Heart right ventricle (tissue), 16 donors: ENCODE measurements at regions of chrX and their contacts with region 1.

Region 1: GRCh38 chrX:148049441-148049840 is 68.3 kb downstream of the FMR1NB start:
- DNase-seq: no peak
- ATAC-seq: no peak
- H3K4me3 ChIP-seq: no peak overlapping the region
- H3K27ac ChIP-seq: no peak overlapping the region
- H3K4me1 ChIP-seq: no peaks in the 10 kb centered on the region
- H3K27me3 ChIP-seq: peaks cover 0 to 4% (median 0%) of the 10 kb centered on the region in 7 donors
- CTCF ChIP-seq: peak; percentile 9 to 67 (median 53)

Region 2: GRCh38 chrX:149286940-149287349 is 1237.5 kb after region 1 on chrX:
- intact Hi-C with region 1: loop called in 4 of 10 experiments (anchors 5 to 10 kb)
- DNase-seq: peak in 1 of 2 donors; percentile 4
- ATAC-seq: no peak
- H3K4me3 ChIP-seq: no peak overlapping the region
- H3K27ac ChIP-seq: no peak overlapping the region
- H3K4me1 ChIP-seq: no peaks in the 10 kb centered on the region
- H3K27me3 ChIP-seq: peaks cover 0 to 14% (median 0%) of the 10 kb centered on the region in 7 donors
- CTCF ChIP-seq: peak; percentile 14 to 74 (median 56)

Region 3: DNA sequence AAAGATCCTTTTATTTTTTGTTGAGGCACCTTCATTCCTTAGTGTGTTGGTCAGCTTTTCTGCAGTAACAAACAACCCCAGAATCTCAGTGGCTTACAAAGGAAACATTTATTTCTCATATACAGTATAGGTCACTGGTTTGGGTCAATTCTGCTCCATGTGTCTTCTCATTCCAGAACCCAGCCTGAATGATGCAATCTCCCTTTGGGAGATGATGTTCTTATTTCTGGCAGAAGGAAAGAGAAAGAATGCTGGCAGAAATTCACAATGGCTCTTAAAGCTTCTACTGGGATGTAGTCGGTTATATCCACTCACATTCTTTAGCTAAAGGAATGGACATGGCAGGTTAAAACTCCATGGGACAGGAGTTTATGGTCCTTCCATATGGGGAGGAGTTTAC is 1413.4 kb after region 1 on chrX:
- intact Hi-C with region 1: loop called in 2 of 10 experiments (anchors 10 kb)
- DNase-seq: peak in 1 of 2 donors; percentile 9
- ATAC-seq: peak in 3 of 8 donors; percentile 33 to 69 (median 61)
- H3K4me3 ChIP-seq: no peak overlapping the region
- H3K27ac ChIP-seq: peak overlapping the region in 1 of 10 donors; percentile 4
- H3K4me1 ChIP-seq: no peaks in the 10 kb centered on the region
- H3K27me3 ChIP-seq: peaks cover 0 to 11% (median 0%) of the 10 kb centered on the region in 7 donors
- CTCF ChIP-seq: no peak

Region 4: DNA sequence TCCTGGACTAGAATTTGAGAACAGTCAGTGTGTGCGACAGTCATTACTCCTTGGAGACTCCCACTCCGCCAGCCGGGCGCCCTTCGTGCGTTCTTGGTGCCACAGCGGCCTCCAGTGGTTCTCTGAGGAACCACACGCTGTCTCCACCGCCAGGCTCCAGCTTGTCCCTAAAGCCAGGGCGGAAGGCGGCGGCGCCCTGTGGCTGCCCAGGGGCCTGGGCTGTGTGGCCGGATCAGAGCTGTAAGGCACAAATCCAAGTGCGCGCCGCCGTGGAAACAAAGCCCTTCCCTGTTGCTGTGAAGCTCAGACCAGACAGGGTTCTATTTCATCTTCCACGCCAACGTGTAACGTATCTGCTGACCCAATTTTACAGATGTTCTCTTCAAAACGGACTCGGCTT is 1421.5 kb after region 1 on chrX:
- intact Hi-C with region 1: loop called in 4 of 10 experiments (anchors 5 to 10 kb)
- DNase-seq: peak; percentile 70 to 81
- ATAC-seq: peak; percentile 84 to 96 (median 94)
- H3K4me3 ChIP-seq: peak overlapping the region in 1 of 10 donors; percentile 26
- H3K27ac ChIP-seq: no peak overlapping the region
- H3K4me1 ChIP-seq: peaks cover 0 to 7% (median 0%) of the 10 kb centered on the region in 9 donors
- H3K27me3 ChIP-seq: peaks cover 0 to 11% (median 0%) of the 10 kb centered on the region in 7 donors
- CTCF ChIP-seq: peak; percentile 58 to 96 (median 84)